Activated T-helper 2 cell treated with anti-CD3 and anti-CD28 coated beads, Interferon-gamma antibody, Interleukin-2, Interleukin-4, amounts not matched to agents 10 μg/mL and 5 μg/mL and 100 μg/mL, durations not matched to agents 14 hours and 24 hours and 36 hours (primary cell): ENCODE measurements at regions of chr7 and their contacts with region 1.

Region 1: GRCh38 chr7:152463709-152464311 is 28.0 kb upstream of the KMT2C start:
- DNase-seq: peak; percentile 100
- H3K4me3 Mint-ChIP-seq: peak overlapping the region; percentile 94
- H3K27ac Mint-ChIP-seq: no peak overlapping the region
- H3K4me1 Mint-ChIP-seq: peaks cover 8% of the 10 kb centered on the region
- H3K27me3 Mint-ChIP-seq: no peaks in the 10 kb centered on the region

Region 2: GRCh38 chr7:152025077-152025936 is 438.5 kb before region 1 on chr7 and contains the start of gene GALNT11:
- intact Hi-C with region 1: loop called (anchors 5 kb)
- DNase-seq: peak; percentile 85
- H3K4me3 Mint-ChIP-seq: peak within 1 kb of the TSS; percentile 85
- H3K27ac Mint-ChIP-seq: peak within 1 kb of the TSS; percentile 68
- H3K4me1 Mint-ChIP-seq: peaks cover 20% of the 10 kb centered on the region
- H3K27me3 Mint-ChIP-seq: peaks cover 4% of the 10 kb centered on the region
- total RNA-seq, gene GALNT11: 21.3 and 22.8 TPM in 2 replicates

Region 3: GRCh38 chr7:152424348-152425108 is 39.3 kb before region 1 on chr7:
- intact Hi-C with region 1: loop called (anchors 5 kb)
- DNase-seq: no peak
- H3K4me3 Mint-ChIP-seq: no peak overlapping the region
- H3K27ac Mint-ChIP-seq: peak overlapping the region; percentile 78
- H3K4me1 Mint-ChIP-seq: peaks cover 35% of the 10 kb centered on the region
- H3K27me3 Mint-ChIP-seq: no peaks in the 10 kb centered on the region

Region 4: DNA sequence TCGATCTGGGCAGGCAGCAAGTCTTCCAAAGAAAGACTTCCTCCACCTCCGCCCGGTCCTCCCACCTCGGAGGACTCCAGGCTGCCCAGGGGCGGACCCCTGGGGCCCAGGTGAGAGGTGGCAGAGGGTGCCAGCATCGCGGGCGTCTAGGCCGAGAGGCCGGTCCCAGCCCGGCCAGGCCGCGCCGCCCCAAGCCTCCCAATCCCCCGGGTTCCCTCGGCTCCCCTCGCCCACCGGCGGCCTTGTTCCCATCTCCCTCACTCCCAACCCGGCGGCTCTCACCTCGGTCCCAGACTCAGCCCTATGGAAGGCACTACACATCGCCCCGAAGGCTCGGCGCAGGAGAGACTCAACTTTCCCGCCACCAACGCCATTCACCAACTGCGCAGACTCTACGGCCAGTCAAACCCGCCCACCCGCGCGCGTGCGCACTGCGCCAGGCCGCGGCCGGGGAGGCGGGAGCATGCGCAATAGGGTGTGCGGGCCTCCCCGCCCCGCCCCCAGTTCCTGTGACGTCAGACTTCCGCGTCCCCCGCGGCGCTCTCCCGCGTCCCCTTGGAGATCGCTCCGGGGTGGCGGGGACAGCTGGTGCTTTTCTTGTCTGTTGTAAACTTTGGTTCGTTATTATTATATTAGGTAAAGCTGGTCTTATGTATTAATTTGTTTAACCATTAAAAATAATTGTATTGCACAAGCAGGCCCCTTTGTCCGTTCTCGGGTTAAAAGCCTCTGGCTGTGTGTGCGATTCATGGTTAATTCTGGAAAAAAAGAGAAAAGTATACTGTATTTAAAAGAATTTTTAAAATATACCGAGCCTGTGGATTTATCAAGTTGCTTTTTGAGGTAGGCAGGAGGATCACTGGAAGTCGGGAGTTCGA is 212.2 kb after region 1 on chr7 and contains the start of gene XRCC2:
- intact Hi-C with region 1: loop called (anchors 1 kb)
- DNase-seq: peak; percentile 94
- H3K4me3 Mint-ChIP-seq: peak within 1 kb of the TSS; percentile 93
- H3K27ac Mint-ChIP-seq: peak within 1 kb of the TSS; percentile 92
- H3K4me1 Mint-ChIP-seq: peaks cover 16% of the 10 kb centered on the region
- H3K27me3 Mint-ChIP-seq: no peaks in the 10 kb centered on the region
- total RNA-seq, gene XRCC2: 21.8 and 22.2 TPM in 2 replicates